ENCODE measurements at regions of chrX and their contacts with region 1.

Region 1: GRCh38 chrX:36640047-36640631 is 368.0 kb upstream of the FAM47C start:
- DNase-seq: no peak
- H3K4me3 Mint-ChIP-seq: no peak overlapping the region
- H3K27ac Mint-ChIP-seq: no peak overlapping the region
- H3K4me1 Mint-ChIP-seq: no peaks in the 10 kb centered on the region
- H3K27me3 Mint-ChIP-seq: no peaks in the 10 kb centered on the region
- CTCF ChIP-seq: no peak

Region 2: GRCh38 chrX:36573720-36574119 is 66.4 kb before region 1 on chrX:
- CTCF ChIA-PET with region 1: no interaction called
- intact Hi-C with region 1: no loop called
- DNase-seq: no peak
- H3K4me3 Mint-ChIP-seq: no peak overlapping the region
- H3K27ac Mint-ChIP-seq: no peak overlapping the region
- H3K4me1 Mint-ChIP-seq: peaks cover 10% of the 10 kb centered on the region
- H3K27me3 Mint-ChIP-seq: no peaks in the 10 kb centered on the region
- CTCF ChIP-seq: no peak

Region 3: GRCh38 chrX:36626898-36627297 is 13.2 kb before region 1 on chrX:
- CTCF ChIA-PET with region 1: no interaction called
- intact Hi-C with region 1: loop called (anchors 1 kb)
- DNase-seq: no peak
- H3K4me3 Mint-ChIP-seq: no peak overlapping the region
- H3K27ac Mint-ChIP-seq: no peak overlapping the region
- H3K4me1 Mint-ChIP-seq: no peaks in the 10 kb centered on the region
- H3K27me3 Mint-ChIP-seq: no peaks in the 10 kb centered on the region
- CTCF ChIP-seq: no peak

Region 4: DNA sequence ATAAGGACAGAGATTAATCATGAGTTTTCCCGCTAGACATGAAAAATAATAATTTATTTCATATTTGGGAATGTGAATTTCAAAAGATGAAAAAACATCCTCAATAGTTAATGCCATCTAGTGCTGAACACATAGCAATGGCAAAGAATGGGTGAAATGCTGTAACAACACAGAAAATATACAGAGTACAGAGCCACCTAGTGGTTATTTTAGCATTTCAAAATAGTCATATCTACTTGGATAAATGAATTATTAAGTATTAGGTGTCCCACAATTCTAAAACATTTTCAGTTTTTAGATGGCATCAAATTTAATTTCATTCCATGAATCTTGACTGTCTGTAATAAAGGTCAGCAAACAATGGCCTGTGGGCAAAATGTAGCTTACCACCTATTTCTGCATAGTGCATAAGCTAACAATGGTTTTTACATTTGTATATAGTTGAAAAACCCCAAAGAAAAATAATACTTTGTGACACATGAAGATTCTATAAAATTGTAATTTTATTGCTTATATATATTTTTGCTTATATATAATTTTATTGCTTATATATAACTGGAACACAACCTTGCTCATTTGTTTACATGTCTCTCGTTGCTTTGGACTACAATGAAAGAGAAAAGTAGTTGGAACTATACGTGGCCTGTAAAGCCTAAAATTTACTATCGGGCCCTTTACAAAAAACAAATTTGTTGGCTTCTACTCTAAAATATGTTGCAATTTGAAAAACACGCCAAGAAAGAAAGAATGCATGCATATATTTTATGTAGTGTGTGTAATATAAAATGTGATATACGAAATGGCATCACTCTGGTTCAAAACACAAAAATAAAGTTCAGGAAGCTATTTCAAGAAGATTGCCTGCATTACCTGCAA is 268.9 kb after region 1 on chrX:
- CTCF ChIA-PET with region 1: no interaction called
- intact Hi-C with region 1: no loop called
- DNase-seq: no peak
- H3K4me3 Mint-ChIP-seq: no peak overlapping the region
- H3K27ac Mint-ChIP-seq: no peak overlapping the region
- H3K4me1 Mint-ChIP-seq: no peaks in the 10 kb centered on the region
- H3K27me3 Mint-ChIP-seq: no peaks in the 10 kb centered on the region
- CTCF ChIP-seq: peak; percentile 51